ENCODE measurements at regions of chr14 and their contacts with region 1.

Region 1: GRCh38 chr14:100375963-100376735 is 53.0 kb downstream of the SLC25A47 start:
- DNase-seq: peak; percentile 93
- CTCF ChIP-seq: no peak

Region 2: GRCh38 chr14:100271247-100271939 is 104.8 kb before region 1 on chr14:
- in situ Hi-C with region 1: no loop called
- DNase-seq: no peak
- CTCF ChIP-seq: no peak

Region 3: GRCh38 chr14:101628471-101628966 is 1252.4 kb after region 1 on chr14:
- in situ Hi-C with region 1: loop called (anchors 25 kb)
- DNase-seq: peak; percentile 91
- CTCF ChIP-seq: peak; percentile 87